ENCODE measurements at regions of chr7 and their contacts with region 1.

Region 1: GRCh38 chr7:102286237-102287110 is at the start of gene SH2B2:
- DNase-seq: no peak
- H3K4me3 ChIP-seq: peak within 1 kb of the TSS; percentile 79
- H3K27me3 ChIP-seq: no peaks in the 10 kb centered on the region
- CTCF ChIP-seq: no peak
- polyA plus RNA-seq, gene SH2B2: 0.56 and 0.58 TPM in 2 replicates

Region 2: DNA sequence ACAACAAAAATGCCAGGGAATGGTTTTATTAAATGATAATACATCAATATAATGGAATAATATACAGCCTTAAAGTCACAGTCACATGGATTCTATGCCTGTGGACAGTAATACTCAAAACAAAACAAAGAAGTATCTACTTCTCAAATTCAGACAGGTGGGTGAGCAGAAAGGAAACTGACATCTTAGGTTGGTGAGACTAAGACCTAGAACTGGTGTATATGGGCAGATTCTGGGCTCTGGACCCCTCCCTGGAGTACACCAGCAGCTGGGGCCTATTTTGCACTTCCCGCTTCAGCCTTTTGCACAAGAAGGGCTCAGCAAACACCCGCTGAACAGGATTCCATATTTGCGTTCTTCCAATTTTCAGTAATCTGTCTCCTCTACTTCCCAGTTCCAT is 1036.2 kb before region 1 on chr7:
- CTCF ChIA-PET with region 1: no interaction called
- POLR2A ChIA-PET with region 1: interaction called, 11 read pairs
- DNase-seq: no peak
- H3K4me3 ChIP-seq: no peak overlapping the region
- H3K27me3 ChIP-seq: no peaks in the 10 kb centered on the region
- CTCF ChIP-seq: no peak

Region 3: DNA sequence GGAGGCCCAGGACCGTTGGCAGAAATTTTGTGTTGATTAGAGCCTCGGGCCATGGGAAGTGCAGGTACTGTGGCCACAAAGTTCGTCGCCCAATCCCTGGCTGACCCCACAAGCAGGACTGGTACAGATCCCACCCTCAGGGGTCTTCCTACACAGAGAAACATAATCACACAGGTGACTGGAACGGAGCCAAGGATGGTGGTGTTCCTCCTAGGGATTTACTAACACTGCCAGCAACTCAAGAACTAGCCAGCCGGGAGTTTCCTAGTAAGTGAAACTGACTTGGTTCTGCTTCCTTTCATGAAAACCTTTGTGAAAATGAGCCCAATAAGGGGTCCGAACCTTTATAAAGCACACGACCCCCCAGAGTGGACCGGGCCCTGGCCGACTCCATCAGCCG is 463.4 kb before region 1 on chr7:
- CTCF ChIA-PET with region 1: no interaction called
- POLR2A ChIA-PET with region 1: no interaction called
- DNase-seq: no peak
- H3K4me3 ChIP-seq: no peak overlapping the region
- H3K27me3 ChIP-seq: no peaks in the 10 kb centered on the region
- CTCF ChIP-seq: no peak

Region 4: GRCh38 chr7:102008535-102009345 is 277.7 kb before region 1 on chr7:
- CTCF ChIA-PET with region 1: no interaction called
- POLR2A ChIA-PET with region 1: no interaction called
- DNase-seq: no peak
- H3K4me3 ChIP-seq: no peak overlapping the region
- H3K27me3 ChIP-seq: no peaks in the 10 kb centered on the region
- CTCF ChIP-seq: no peak

Region 5: GRCh38 chr7:102061981-102062390 is 224.5 kb before region 1 on chr7:
- CTCF ChIA-PET with region 1: no interaction called
- POLR2A ChIA-PET with region 1: interaction called, 12 read pairs
- DNase-seq: no peak
- H3K4me3 ChIP-seq: no peak overlapping the region
- H3K27me3 ChIP-seq: no peaks in the 10 kb centered on the region
- CTCF ChIP-seq: no peak

Region 6: GRCh38 chr7:102376964-102377466 is 90.5 kb after region 1 on chr7:
- CTCF ChIA-PET with region 1: no interaction called
- POLR2A ChIA-PET with region 1: no interaction called
- DNase-seq: no peak
- H3K4me3 ChIP-seq: no peak overlapping the region
- H3K27me3 ChIP-seq: no peaks in the 10 kb centered on the region
- CTCF ChIP-seq: no peak

Measured in BJ (cell line).